ENCODE measurements at regions of chr10 and their contacts with region 1.

Region 1: DNA sequence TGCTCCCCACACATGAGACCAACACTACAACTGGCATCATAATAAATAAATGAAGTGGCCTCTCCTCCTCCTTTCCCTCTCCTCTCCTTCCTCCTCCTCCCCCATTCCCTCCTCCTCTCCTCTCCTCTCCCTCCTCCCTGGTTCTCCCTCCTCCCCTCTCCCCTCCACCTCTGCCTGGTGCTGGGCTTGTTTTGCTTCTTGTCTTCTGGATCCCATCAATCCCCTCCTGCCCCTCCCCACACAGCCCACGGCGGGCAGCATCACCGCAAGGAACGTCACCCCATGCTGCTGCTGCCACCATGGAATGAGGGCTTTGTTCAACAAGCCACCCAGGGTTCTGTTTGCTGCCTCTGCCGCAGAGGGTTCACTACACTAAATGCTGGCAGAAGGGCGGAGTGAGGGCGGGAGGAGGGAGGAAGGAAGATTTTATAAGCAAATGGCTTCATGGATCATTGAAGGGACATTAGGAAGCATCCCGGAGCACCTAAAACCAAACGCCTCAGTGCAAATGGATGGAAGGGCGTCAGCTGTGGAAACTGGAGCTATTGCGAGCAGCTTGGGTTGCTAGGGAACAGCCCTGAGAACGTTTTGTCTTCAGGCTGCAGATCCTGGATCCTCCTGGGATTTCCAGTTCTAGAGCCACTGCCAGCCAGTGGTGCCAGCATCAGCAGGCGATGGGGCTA is 379.7 kb upstream of the ZMIZ1 start:
- DNase-seq: peak; percentile 85

Region 2: GRCh38 chr10:78953113-78953798 is 264.2 kb after region 1 on chr10:
- intact Hi-C with region 1: loop called in 1 of 2 experiments (anchors 10 kb)
- DNase-seq: no peak

Measured in posterior vena cava (tissue), 2 donors.